Posterior vena cava (tissue), 2 donors: ENCODE measurements at regions of chr11 and their contacts with region 1.

Region 1: DNA sequence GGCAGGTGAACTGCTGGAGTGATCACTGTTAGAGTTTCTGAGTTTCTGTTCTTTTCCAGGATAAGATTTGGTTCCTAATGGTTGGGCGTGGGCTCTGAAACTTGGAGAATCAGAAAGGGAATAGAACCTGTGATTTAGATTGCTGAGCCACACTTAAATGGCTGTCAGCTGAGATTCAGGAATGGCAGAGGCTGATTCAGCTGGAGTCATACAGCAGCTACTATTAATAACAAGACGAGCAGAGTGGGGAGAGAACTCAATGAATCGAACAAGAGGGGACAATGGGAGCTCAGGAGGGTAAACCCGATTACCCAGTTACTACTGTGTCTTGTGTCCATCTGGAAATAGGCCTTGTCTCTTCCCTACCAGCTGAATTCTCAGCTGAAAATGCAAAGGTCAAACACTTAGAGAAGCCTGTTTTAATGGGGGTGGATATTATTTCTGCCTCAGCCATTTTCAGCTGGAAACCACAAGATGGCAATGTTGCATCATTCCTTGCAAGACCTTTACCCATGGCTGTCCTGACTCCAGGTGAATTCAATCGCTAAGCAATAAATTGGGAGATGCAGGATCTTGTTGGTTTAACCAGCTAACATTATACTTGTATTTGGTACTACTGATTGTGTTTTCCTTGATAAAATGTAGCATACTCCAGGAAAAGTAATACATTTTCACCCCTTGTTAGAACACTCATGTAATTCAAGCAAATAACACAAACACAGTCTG is 104.5 kb upstream of the RAG2 start:
- DNase-seq: no peak

Region 2: DNA sequence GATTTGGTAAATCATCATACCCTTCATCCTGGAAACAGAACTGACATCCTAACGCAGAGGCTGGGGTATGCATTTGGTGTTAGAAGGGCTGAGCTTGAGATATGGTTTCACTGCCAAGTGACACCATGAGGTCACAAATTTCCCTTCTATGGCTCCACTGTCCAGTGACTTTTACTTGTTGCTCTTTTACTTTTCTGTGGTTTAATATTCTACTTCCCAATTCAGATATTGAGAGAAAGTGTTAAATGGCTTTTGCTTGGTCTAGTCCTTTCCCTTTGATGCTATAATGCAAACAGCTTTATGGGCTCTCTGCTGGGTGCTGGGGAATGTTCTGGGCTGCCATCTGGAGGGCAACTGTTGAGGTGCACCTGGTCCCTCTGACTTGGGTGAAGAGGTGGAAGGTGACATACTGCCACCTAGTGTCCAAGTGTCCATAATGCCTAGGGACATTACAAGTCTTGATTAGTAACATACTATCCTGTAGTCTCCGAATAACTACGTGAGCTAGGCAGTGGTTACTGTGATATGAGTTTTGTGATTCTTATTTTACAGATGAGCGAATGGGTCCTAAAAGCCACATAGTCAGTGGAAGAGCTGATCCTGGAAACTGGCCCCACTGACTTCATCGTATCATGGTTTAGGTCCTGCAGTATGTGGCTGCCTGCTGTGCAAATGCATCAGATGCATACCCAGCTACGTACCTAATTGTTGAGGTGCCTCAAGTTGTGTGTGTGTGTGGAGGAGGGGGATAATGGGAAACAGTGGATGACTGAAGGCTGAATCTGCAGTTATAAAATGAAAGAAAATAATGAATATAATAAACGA is 44.6 kb after region 1 on chr11:
- intact Hi-C with region 1: loop called in 1 of 2 experiments (anchors 5 kb)
- DNase-seq: peak; percentile 93

Region 3: DNA sequence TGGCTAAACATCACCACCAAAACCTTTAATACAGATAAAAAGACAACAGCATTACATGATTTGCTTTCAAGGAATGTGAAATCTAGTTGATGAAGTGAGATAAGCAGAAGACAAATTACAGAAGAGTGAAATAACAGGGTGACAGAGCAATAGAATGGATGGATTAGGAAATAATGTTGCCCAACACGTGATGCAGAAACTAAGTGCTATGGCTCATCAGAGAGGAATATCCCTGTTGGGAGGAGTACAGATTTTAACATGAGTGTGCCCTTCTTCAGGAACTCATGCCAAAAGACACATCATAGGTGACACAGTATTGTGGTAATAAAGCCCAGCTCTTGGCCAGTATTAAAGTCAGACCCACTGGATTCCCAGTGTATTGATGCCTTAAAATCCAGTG is 72.1 kb after region 1 on chr11:
- intact Hi-C with region 1: no loop called
- DNase-seq: no peak